CD14-positive monocyte (primary cell): ENCODE measurements at regions of chr6 and their contacts with region 1.

Region 1: DNA sequence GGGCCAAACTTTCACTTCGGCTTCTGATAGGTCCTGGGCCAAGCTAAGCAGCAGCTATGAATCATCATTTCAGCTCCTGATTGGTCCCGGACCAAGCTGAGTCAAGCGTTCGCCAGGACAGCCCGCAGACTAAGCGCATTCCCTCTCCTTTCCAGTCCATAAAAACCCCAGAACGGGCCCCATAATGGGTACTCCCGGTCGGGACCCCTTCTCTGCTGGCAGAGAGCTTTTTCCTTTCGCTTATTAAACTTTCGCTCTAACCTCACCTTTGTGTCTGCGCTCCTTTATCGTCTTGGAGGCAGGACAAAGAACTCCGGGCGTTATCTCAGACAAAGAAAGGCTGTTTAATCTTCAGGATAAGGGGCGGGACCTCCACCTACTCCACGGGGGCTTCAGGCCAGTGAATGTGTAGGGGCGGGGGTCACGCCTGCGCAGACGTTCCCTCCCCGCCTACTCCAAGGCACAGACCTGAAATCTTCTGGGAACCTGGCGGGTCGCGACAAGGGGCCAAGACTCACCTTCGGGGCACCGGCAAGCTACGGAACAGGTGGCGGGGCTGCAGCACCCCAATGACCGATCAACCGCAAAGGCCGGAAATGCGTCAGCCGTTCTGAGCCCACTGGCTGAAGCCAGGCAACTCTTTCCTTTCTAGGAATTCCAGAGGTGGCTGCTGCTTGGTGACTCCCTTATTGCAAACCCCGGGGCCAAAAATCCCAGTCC is at the start of gene ZSCAN31:
- DNase-seq: peak; percentile 91 to 98 (median 98)
- H3K4me3 ChIP-seq: peak within 1 kb of the TSS; percentile 86 to 94 (median 89)
- H3K4me3 Mint-ChIP-seq: no peak within 1 kb of the TSS
- H3K27ac ChIP-seq: peak within 1 kb of the TSS; percentile 88 to 90
- H3K27ac Mint-ChIP-seq: peak within 1 kb of the TSS in 1 of 7 donors; percentile 57
- H3K4me1 ChIP-seq: peaks cover 15 to 16% of the 10 kb centered on the region in 2 donors
- H3K4me1 Mint-ChIP-seq: peaks cover 5% of the 10 kb centered on the region
- H3K27me3 ChIP-seq: no peaks in the 10 kb centered on the region
- H3K27me3 Mint-ChIP-seq: no peaks in the 10 kb centered on the region
- CTCF ChIP-seq: no peak
- polyA plus RNA-seq, gene ZSCAN31: 0.25 to 0.35 TPM in 2 of 3 donors, not detected in the other

Region 2: DNA sequence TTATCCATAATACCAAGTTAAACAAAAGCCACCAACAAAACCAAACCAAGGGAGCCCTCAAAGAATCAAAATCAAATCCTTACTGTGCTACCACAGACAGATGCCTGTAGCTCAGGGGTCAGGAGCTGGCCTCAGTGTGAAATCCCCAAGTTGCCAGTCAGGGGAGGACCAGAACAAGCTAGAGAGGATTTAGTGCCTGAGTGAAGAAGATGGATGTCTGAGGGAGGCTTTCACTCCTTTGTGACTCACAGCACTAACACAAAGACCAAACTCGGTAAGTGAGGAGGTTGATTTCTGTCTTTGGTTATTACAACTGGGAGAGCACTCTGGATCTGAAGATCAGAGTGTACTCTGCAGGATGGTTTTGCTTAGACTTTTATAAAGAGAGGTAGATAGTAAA is 673.0 kb before region 1 on chr6:
- intact Hi-C with region 1: no loop called
- DNase-seq: no peak
- H3K4me3 ChIP-seq: no peak overlapping the region
- H3K4me3 Mint-ChIP-seq: no peak overlapping the region
- H3K27ac ChIP-seq: no peak overlapping the region
- H3K27ac Mint-ChIP-seq: no peak overlapping the region
- H3K4me1 ChIP-seq: no peaks in the 10 kb centered on the region
- H3K4me1 Mint-ChIP-seq: peaks cover 2% of the 10 kb centered on the region
- H3K27me3 ChIP-seq: peaks cover 15 to 23% of the 10 kb centered on the region in 2 donors
- H3K27me3 Mint-ChIP-seq: peaks cover 37 to 50% (median 40%) of the 10 kb centered on the region in 3 donors
- CTCF ChIP-seq: no peak

Region 3: DNA sequence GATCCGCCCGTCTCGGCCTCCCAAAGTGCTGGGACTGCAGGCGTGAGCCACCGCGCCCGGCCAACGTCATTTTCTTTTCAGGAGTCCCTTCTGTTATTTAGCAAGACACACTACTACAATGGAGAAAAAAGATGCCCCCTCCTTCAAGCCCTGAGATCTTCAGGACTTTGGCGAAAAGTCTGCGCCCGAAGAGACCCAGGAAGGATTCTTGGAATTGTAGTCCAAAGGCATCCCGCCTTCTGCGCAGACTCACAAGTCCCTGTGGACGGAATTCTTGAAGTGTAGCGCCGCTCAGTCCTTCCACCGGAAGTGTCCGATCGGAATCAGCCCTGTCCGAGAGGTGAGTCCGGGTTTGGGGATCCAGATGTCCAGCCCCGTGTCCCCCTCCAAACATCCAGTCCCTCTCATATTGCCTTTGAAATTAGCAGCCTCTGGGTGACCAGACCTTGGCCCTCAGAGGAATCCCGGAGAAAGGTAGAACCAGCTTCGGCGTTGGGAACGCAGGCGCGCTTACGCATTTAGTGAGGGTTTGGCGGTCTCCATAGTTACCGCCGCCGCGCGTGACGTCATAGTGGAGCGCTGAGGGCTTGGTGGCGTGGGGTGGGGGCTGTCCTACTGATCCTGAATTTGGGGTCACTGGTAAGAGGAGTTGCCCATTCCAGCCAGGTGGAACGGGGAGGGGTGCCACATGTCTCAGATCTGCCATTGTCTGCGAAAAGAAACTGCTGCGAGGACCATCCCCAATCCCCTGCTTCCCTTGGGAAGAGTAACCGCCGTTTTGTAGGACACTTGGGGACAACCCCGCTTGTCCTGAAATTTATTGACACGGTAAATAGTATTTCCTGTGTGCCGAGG is 254.9 kb before region 1 on chr6:
- intact Hi-C with region 1: loop called in 1 of 2 experiments (anchors 10 kb)
- DNase-seq: peak; percentile 94 to 96 (median 95)
- H3K4me3 ChIP-seq: peak overlapping the region; percentile 53 to 98 (median 80)
- H3K4me3 Mint-ChIP-seq: peak overlapping the region; percentile 96 to 97
- H3K27ac ChIP-seq: peak overlapping the region; percentile 80 to 94
- H3K27ac Mint-ChIP-seq: peak overlapping the region; percentile 93 to 100 (median 99)
- H3K4me1 ChIP-seq: peaks cover 4 to 8% of the 10 kb centered on the region in 2 donors
- H3K4me1 Mint-ChIP-seq: peaks cover 13% of the 10 kb centered on the region
- H3K27me3 ChIP-seq: no peaks in the 10 kb centered on the region
- H3K27me3 Mint-ChIP-seq: peaks cover 0 to 2% (median 0%) of the 10 kb centered on the region in 3 donors
- CTCF ChIP-seq: no peak

Region 4: GRCh38 chr6:28160233-28160632 is 175.5 kb before region 1 on chr6:
- intact Hi-C with region 1: no loop called
- DNase-seq: no peak
- H3K4me3 ChIP-seq: no peak overlapping the region
- H3K4me3 Mint-ChIP-seq: no peak overlapping the region
- H3K27ac ChIP-seq: no peak overlapping the region
- H3K27ac Mint-ChIP-seq: no peak overlapping the region
- H3K4me1 ChIP-seq: peaks cover 11 to 14% of the 10 kb centered on the region in 2 donors
- H3K4me1 Mint-ChIP-seq: peaks cover 14% of the 10 kb centered on the region
- H3K27me3 ChIP-seq: peaks cover 0 to 4% of the 10 kb centered on the region in 2 donors
- H3K27me3 Mint-ChIP-seq: peaks cover 0 to 3% (median 2%) of the 10 kb centered on the region in 3 donors
- CTCF ChIP-seq: no peak

Region 5: DNA sequence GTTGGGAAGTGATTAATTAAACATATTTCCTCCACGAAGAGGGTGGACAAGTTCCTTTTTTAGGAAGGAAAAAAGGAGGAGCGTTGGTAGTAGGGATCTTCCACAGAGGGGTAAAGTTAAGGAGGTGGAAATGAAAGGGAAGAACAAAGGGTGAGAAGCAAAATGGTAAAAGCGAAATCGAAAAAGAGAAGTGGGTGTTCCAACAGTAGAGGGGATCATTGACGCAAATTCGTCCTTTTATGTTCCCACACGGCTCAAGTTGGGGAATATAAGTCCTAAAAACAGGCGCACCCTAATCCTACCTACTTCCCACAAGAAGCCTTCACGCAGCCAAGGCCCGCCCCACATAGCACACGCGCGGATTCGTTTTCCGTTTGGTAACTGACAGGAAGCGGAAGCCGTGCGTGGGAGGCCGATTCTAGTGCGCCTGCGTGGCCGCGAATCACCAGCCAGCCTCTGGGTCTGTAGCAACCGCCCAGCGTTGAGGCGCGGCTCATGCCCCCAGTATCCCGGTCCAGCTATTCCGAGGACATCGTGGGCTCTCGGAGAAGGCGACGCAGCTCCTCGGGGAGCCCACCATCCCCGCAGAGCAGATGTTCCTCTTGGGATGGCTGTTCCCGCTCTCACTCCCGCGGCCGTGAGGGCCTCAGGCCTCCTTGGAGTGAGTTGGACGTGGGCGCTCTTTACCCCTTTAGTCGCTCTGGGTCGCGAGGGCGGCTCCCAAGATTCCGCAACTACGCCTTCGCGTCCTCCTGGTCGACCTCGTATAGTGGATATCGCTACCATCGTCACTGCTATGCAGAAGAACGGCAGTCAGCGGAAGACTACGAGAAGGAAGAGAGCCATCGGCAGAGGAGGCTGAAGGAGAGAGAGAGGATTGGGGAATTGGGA is 76.6 kb before region 1 on chr6 and contains the start of gene NKAPL:
- intact Hi-C with region 1: loop called (anchors 5 to 10 kb)
- DNase-seq: peak; percentile 80 to 91 (median 87)
- H3K4me3 ChIP-seq: peak within 1 kb of the TSS; percentile 32 to 70 (median 63)
- H3K4me3 Mint-ChIP-seq: peak within 1 kb of the TSS; percentile 66 to 93
- H3K27ac ChIP-seq: peak within 1 kb of the TSS; percentile 46 to 69
- H3K27ac Mint-ChIP-seq: peak within 1 kb of the TSS; percentile 85 to 95 (median 88)
- H3K4me1 ChIP-seq: peaks cover 13 to 18% of the 10 kb centered on the region in 2 donors
- H3K4me1 Mint-ChIP-seq: peaks cover 11% of the 10 kb centered on the region
- H3K27me3 ChIP-seq: peaks cover 0 to 2% of the 10 kb centered on the region in 2 donors
- H3K27me3 Mint-ChIP-seq: peaks cover 0 to 9% (median 3%) of the 10 kb centered on the region in 3 donors
- CTCF ChIP-seq: no peak
- polyA plus RNA-seq, gene NKAPL: 0.12 to 1.1 (median 0.94) TPM

Region 6: DNA sequence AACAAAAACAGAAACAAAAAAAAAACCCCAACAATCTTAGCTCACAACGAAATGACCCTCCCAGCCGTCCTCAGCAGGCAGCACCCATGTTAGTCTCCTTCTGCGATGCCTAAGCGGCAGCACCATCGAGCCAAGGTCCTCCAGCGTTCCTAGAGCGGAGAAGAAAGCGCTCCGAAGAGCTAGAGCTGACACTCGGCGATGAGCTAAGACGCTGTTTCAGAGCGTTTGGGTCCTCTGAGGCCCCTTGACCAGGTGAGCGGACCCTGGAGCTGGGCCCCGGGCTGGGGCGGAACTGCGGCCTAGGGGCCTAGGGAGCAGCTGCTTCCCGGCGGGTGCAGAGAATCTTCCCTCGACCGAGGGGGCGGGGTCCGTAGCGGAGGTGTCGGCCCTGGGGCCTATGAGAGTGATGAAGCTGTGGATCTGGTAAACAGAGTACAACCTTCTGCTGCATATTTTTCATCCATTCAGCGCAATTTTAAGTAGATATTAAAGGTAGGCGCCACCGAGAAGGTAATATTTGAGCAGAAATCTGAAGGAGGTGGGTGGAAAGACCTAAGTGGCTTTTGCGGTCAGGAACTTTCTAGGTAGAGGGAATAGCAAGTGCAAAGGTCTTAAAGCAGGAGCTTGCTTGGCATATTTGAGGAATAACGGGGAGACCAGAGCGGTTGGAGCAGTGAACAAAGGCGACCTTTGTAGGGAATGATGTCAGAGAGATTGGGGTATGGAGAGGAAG is 68.6 kb before region 1 on chr6 and contains the start of gene ZSCAN26:
- intact Hi-C with region 1: loop called in 1 of 2 experiments (anchors 10 kb)
- DNase-seq: peak; percentile 67 to 76 (median 74)
- H3K4me3 ChIP-seq: peak within 1 kb of the TSS; percentile 59 to 95 (median 83)
- H3K4me3 Mint-ChIP-seq: no peak within 1 kb of the TSS
- H3K27ac ChIP-seq: peak within 1 kb of the TSS; percentile 39 to 82
- H3K27ac Mint-ChIP-seq: no peak within 1 kb of the TSS
- H3K4me1 ChIP-seq: peaks cover 7 to 9% of the 10 kb centered on the region in 2 donors
- H3K4me1 Mint-ChIP-seq: no peaks in the 10 kb centered on the region
- H3K27me3 ChIP-seq: no peaks in the 10 kb centered on the region
- H3K27me3 Mint-ChIP-seq: peaks cover 0 to 1% (median 0%) of the 10 kb centered on the region in 3 donors
- CTCF ChIP-seq: no peak
- polyA plus RNA-seq, gene ZSCAN26: 3.4 to 8.3 (median 3.5) TPM

Region 7: GRCh38 chr6:28769626-28770402 is 434.1 kb after region 1 on chr6:
- intact Hi-C with region 1: no loop called
- DNase-seq: no peak
- H3K4me3 ChIP-seq: no peak overlapping the region
- H3K4me3 Mint-ChIP-seq: peak overlapping the region in 1 of 2 donors; percentile 35
- H3K27ac ChIP-seq: no peak overlapping the region
- H3K27ac Mint-ChIP-seq: no peak overlapping the region
- H3K4me1 ChIP-seq: no peaks in the 10 kb centered on the region
- H3K4me1 Mint-ChIP-seq: peaks cover 6% of the 10 kb centered on the region
- H3K27me3 ChIP-seq: peaks cover 98 to 100% of the 10 kb centered on the region in 2 donors
- H3K27me3 Mint-ChIP-seq: peaks cover 93 to 100% (median 96%) of the 10 kb centered on the region in 3 donors
- CTCF ChIP-seq: no peak